ENCODE measurements at regions of chr15 and their contacts with region 1.

Region 1: DNA sequence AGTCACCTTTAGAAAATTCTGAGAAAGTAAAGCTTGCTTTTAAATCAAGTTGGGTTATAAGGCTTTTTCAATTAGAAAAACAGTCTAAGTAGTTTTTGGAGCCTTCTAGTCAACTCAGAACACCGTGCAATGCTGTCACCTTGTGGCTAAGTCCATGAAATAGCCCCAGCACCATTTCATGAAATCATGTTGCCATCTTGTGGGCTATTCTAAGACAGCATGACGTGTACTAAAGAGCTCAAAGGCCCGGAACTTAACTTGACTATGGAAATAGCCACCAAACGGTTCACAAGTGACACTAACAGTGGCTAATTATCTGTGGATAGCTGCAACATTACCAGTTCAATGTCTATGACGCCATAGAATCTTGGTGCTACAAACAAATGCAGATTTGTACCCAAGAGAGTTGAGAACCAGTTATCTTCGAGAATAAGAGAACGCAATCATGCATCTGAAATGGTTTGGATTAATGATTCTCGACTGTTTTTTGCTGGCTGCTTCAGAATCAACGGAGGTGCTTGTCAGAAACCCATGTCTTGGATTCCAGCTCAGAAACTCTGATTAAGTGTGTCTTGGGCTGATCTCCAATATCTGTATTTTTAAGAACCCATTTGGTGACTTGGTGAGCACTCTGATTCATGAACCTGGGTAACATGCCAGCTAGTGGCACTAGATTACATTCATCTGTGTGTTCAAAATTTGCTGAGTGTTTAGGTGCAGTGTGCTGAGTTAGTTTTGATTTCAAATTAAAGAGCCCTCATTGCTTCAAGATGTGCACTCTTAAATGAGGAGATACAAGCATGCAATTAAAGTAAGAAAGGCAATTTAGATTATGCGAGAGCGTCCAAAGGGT is 111.2 kb upstream of the MCTP2 start:
- DNase-seq: peak; percentile 62
- H3K4me3 Mint-ChIP-seq: no peak overlapping the region
- H3K27ac Mint-ChIP-seq: no peak overlapping the region
- H3K4me1 Mint-ChIP-seq: no peaks in the 10 kb centered on the region
- H3K27me3 Mint-ChIP-seq: no peaks in the 10 kb centered on the region

Region 2: DNA sequence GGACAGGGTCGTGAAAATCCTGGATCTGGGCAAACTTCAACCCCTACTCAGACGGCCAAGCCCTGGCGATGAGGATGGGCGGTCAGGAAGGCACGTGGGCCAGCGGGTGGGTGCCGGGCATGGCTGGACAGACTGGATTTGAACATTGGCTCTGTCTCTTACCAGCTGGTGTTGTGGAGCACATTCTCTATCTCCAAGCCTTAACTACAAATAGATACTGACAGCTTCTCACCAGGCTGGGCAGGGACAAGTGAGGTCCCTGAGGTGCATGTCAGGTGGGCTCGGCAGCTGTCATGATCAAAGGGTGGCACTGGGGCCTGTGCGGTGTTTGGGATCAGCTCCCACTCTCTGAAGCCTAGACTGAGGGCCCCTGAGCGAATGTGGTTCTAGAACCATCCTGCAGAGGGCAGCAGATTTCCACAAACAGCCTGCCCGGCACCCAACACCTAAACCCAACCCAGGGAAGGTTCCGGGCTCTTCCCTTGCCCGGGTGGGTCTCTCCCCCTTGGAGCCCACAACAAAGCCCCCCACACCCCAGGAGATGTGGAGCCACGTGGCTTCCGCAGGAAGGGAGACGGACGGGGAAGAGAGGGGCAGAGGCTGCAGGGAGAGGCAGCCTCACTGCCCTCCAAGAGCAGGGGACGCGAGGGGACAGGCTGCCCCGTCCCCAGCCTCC is 1089.6 kb before region 1 on chr15:
- CTCF ChIA-PET with region 1: interaction called, 51 read pairs
- DNase-seq: peak; percentile 78
- H3K4me3 Mint-ChIP-seq: no peak overlapping the region
- H3K27ac Mint-ChIP-seq: peak overlapping the region; percentile 49
- H3K4me1 Mint-ChIP-seq: peaks cover 16% of the 10 kb centered on the region
- H3K27me3 Mint-ChIP-seq: peaks cover 3% of the 10 kb centered on the region

Region 3: DNA sequence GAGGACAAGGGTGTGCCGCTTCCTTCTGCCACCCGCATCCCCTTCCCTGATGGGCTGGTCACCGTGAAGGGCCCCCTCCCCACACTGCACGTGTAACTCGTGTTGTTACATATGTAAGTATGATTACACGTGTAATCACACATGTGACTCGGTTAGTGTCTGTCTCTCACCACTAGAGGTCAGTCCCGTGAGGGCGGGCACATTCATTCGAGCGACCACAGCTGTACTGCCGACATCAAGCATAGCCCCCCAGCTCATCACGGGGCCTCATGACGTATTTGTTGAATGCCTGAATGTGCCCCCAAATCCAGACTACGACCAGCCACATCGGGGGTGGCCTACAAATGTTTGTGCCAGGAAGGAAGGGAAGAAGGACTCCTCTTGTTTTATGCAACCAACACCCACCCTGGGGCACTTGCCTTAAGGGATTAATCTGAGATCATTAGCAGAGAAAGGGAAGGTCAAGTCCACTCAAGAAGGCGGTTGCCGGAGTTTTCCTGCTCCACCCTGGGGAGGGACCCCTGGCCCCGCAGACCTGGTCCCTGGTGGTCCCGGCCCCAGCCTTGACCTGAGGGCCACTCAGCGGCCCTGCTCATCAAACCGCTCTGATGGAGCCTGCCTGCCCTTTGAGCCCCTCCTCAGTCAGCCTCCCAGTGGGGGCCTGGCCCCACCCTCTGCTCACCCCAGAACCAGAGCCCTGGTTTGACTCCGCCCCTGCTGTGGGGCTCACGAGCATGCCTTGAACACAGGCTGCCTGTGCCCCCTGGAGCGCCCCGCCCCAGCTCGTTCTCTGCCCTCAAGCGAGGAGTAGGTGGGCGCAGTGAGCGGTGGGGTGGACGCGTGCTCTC is 1084.0 kb before region 1 on chr15:
- CTCF ChIA-PET with region 1: interaction called, 51 read pairs
- DNase-seq: peak; percentile 61
- H3K4me3 Mint-ChIP-seq: no peak overlapping the region
- H3K27ac Mint-ChIP-seq: no peak overlapping the region
- H3K4me1 Mint-ChIP-seq: peaks cover 2% of the 10 kb centered on the region
- H3K27me3 Mint-ChIP-seq: peaks cover 3% of the 10 kb centered on the region

Region 4: GRCh38 chr15:94070356-94071295 is 49.5 kb before region 1 on chr15:
- CTCF ChIA-PET with region 1: no interaction called
- DNase-seq: no peak
- H3K4me3 Mint-ChIP-seq: no peak overlapping the region
- H3K27ac Mint-ChIP-seq: no peak overlapping the region
- H3K4me1 Mint-ChIP-seq: no peaks in the 10 kb centered on the region
- H3K27me3 Mint-ChIP-seq: peaks cover 5% of the 10 kb centered on the region

Region 5: DNA sequence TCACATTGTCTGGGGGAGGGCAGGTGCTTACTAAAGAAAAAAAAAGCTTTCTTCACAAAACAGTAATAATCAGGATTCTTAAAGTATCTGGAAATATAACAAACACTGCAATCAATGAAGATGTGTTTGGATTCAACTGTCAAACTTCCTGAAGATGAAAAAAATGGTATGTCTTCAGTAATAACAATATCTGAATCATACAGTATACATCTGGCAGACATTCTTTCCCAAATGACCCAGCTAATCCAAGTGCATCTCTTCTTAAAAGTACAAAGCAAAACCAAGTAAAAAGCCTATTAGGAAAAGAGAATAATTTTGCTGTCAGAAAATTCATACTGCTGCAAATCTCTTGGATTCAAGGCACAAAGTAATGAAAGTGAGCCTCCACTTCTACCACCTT is 33.8 kb before region 1 on chr15:
- CTCF ChIA-PET with region 1: no interaction called
- DNase-seq: no peak
- H3K4me3 Mint-ChIP-seq: no peak overlapping the region
- H3K27ac Mint-ChIP-seq: no peak overlapping the region
- H3K4me1 Mint-ChIP-seq: no peaks in the 10 kb centered on the region
- H3K27me3 Mint-ChIP-seq: peaks cover 8% of the 10 kb centered on the region

Region 6: GRCh38 chr15:94206463-94207167 is 86.5 kb after region 1 on chr15:
- CTCF ChIA-PET with region 1: no interaction called
- DNase-seq: peak; percentile 53
- H3K4me3 Mint-ChIP-seq: peak overlapping the region; percentile 38
- H3K27ac Mint-ChIP-seq: peak overlapping the region; percentile 88
- H3K4me1 Mint-ChIP-seq: peaks cover 26% of the 10 kb centered on the region
- H3K27me3 Mint-ChIP-seq: no peaks in the 10 kb centered on the region

Measured in activated naive CD4-positive, alpha-beta T cell treated with anti-CD3 and anti-CD28 coated beads, Interleukin-2, amount 10 ng/mL, durations not matched to agents 7 days and 5 days (primary cell).